AG04450 (cell line): ENCODE measurements at regions of chr1 and their contacts with region 1.

Region 1: GRCh38 chr1:226397011-226397926 is 10.6 kb downstream of the PARP1 start:
- DNase-seq: no peak
- H3K4me3 ChIP-seq: no peak overlapping the region
- H3K27ac ChIP-seq: no peak overlapping the region
- H3K27me3 ChIP-seq: no peaks in the 10 kb centered on the region
- CTCF ChIP-seq: no peak

Region 2: GRCh38 chr1:226370144-226370923 is 26.9 kb before region 1 on chr1:
- CTCF ChIA-PET with region 1: interaction called, 12 read pairs
- POLR2A ChIA-PET with region 1: no interaction called
- DNase-seq: no peak
- H3K4me3 ChIP-seq: no peak overlapping the region
- H3K27ac ChIP-seq: no peak overlapping the region
- H3K27me3 ChIP-seq: no peaks in the 10 kb centered on the region
- CTCF ChIP-seq: no peak

Region 3: DNA sequence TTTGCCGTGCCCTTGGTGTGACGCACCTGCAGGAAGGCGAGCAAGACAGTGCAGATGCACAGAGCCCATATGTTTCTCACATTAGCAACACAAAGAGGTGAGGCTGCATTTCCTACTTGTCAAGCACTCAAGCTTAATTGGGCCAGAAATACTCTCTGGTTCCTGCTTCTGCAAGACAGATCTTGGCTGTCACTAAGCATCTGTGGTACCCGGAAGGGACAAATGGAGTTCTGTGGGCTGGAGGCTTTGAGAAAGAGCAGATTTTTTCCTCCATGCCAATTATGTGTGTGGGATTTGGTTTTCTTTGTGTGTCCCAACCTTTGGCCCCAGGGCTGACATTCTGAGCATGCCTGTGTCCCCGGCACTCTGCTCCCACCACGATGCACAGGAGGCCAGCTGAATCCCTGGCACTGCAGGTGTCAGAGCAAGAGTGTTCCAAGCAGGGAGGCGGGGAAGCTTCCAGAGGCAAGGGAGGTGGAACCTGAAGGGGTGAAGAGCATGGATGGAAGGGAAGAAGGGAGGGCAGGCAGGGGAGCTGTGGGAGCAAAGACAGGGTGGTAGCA is 99.3 kb after region 1 on chr1:
- CTCF ChIA-PET with region 1: no interaction called
- POLR2A ChIA-PET with region 1: no interaction called
- DNase-seq: no peak
- H3K4me3 ChIP-seq: no peak overlapping the region
- H3K27ac ChIP-seq: no peak overlapping the region
- H3K27me3 ChIP-seq: no peaks in the 10 kb centered on the region
- CTCF ChIP-seq: no peak

Region 4: GRCh38 chr1:226558036-226558650 is 160.9 kb after region 1 on chr1:
- CTCF ChIA-PET with region 1: no interaction called
- POLR2A ChIA-PET with region 1: no interaction called
- DNase-seq: no peak
- H3K4me3 ChIP-seq: no peak overlapping the region
- H3K27ac ChIP-seq: no peak overlapping the region
- H3K27me3 ChIP-seq: peaks cover 20% of the 10 kb centered on the region
- CTCF ChIP-seq: no peak